ENCODE measurements at regions of chr3 and their contacts with region 1.

Region 1: DNA sequence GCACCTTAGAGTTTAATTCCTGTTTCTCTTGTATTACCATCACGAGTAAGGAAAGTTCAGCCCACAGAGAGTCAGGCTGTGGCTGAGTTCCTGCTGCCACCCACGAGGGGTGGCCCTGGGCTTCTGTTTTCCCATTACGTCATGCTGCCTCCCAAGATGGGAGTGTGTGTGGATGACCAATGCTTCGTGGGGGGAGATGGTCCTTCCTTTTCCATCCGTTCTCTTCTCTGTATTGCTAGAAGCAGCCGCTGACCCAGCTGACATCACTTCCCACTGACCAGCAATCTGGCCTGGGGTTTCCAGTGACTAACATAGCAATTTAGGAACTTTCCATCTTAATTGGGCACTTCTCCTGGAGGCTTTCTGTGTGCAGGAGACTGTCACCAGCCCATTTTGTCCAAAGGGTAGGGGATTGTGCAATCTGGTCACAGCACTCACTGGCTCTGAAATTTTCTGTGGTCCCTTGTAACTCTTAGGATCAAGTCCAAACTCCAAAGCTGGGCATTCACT is 9.3 kb downstream of the IRAK2 start:
- DNase-seq: no peak
- ATAC-seq: peak; percentile 59
- H3K4me3 Mint-ChIP-seq: no peak overlapping the region
- H3K27ac Mint-ChIP-seq: peak overlapping the region; percentile 70
- H3K4me1 Mint-ChIP-seq: peaks cover 36% of the 10 kb centered on the region
- H3K27me3 Mint-ChIP-seq: no peaks in the 10 kb centered on the region
- CTCF ChIP-seq: no peak

Region 2: GRCh38 chr3:9669720-9670432 is 504.1 kb before region 1 on chr3:
- CTCF ChIA-PET with region 1: no interaction called
- POLR2A ChIA-PET with region 1: no interaction called
- intact Hi-C with region 1: no loop called
- DNase-seq: no peak
- ATAC-seq: no peak
- H3K4me3 Mint-ChIP-seq: no peak overlapping the region
- H3K27ac Mint-ChIP-seq: no peak overlapping the region
- H3K4me1 Mint-ChIP-seq: no peaks in the 10 kb centered on the region
- H3K27me3 Mint-ChIP-seq: no peaks in the 10 kb centered on the region
- CTCF ChIP-seq: no peak

Region 3: GRCh38 chr3:10115326-10116137 is 58.4 kb before region 1 on chr3 and contains the start of gene BRK1:
- CTCF ChIA-PET with region 1: no interaction called
- POLR2A ChIA-PET with region 1: no interaction called
- intact Hi-C with region 1: no loop called
- DNase-seq: peak; percentile 85
- ATAC-seq: peak; percentile 96
- H3K4me3 Mint-ChIP-seq: peak within 1 kb of the TSS; percentile 100
- H3K27ac Mint-ChIP-seq: peak within 1 kb of the TSS; percentile 99
- H3K4me1 Mint-ChIP-seq: peaks cover 40% of the 10 kb centered on the region
- H3K27me3 Mint-ChIP-seq: no peaks in the 10 kb centered on the region
- CTCF ChIP-seq: no peak
- total RNA-seq, gene BRK1: 123 and 141 TPM in 2 replicates

Region 4: GRCh38 chr3:10185804-10186762 is 12.1 kb after region 1 on chr3:
- CTCF ChIA-PET with region 1: interaction called, 3 read pairs
- POLR2A ChIA-PET with region 1: interaction called, 10 read pairs
- intact Hi-C with region 1: no loop called
- DNase-seq: no peak
- ATAC-seq: no peak
- H3K4me3 Mint-ChIP-seq: no peak overlapping the region
- H3K27ac Mint-ChIP-seq: peak overlapping the region; percentile 63
- H3K4me1 Mint-ChIP-seq: peaks cover 55% of the 10 kb centered on the region
- H3K27me3 Mint-ChIP-seq: no peaks in the 10 kb centered on the region
- CTCF ChIP-seq: no peak

Measured in activated B cell treated with CpG ODN at 0.5 μM for 24 hours (primary cell).